ENCODE measurements at regions of chr16 and their contacts with region 1.

Region 1: DNA sequence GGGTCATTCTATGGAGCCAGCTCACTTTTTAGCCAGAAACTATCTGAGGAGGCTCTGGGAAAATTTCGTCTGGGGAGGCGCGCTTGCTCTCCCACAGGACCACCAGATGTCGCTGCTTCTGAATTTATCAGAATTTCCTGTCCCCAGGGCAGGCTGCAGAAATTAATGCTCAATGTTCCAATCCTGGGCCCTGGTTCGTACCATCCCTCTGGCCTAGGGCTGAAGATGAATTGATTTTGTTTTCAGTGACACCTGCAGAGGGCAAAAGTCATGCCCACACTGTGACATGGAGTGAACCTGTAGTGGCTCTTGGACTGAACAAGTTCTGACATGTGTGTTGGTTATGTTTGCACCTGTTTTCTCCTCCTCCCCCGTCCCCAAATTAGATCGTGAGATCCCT is 482.6 kb downstream of the NPIPA7 start:
- DNase-seq: peak; percentile 22 to 25
- ATAC-seq: peak in 3 of 8 donors; percentile 16 to 41 (median 32)
- H3K4me3 ChIP-seq: no peak overlapping the region
- H3K27ac ChIP-seq: no peak overlapping the region
- H3K4me1 ChIP-seq: peaks cover 0 to 30% (median 5%) of the 10 kb centered on the region in 9 donors
- H3K27me3 ChIP-seq: peaks cover 0 to 14% (median 0%) of the 10 kb centered on the region in 7 donors
- CTCF ChIP-seq: peak; percentile 29 to 82 (median 73)

Region 2: DNA sequence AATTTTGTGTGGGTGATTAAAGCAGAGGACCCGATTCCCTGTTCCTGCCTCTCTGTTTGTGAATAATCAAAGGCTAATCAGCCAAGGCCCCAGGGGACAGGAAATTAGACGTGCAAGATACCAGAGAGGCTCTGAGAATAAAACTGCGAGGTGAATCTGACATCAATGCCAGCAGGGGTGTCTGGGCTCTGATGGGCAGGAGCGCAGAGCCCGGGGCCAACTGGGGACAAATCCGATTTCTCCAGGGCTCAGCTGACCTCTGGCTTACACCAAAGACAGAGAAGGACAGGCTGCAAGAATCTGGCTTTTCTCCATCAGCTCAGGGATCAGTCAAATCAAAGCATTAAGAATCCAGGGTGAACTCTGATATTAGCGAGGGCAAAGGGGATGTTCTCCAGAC is 434.9 kb after region 1 on chr16:
- intact Hi-C with region 1: loop called in 1 of 10 experiments (anchors 10 kb)
- DNase-seq: peak; percentile 19 to 39
- ATAC-seq: peak in 7 of 8 donors; percentile 34 to 85 (median 64)
- H3K4me3 ChIP-seq: no peak overlapping the region
- H3K27ac ChIP-seq: peak overlapping the region in 5 of 10 donors; percentile 12 to 55 (median 40)
- H3K4me1 ChIP-seq: peaks cover 2 to 17% (median 10%) of the 10 kb centered on the region in 9 donors
- H3K27me3 ChIP-seq: no peaks in the 10 kb centered on the region
- CTCF ChIP-seq: no peak

Region 3: DNA sequence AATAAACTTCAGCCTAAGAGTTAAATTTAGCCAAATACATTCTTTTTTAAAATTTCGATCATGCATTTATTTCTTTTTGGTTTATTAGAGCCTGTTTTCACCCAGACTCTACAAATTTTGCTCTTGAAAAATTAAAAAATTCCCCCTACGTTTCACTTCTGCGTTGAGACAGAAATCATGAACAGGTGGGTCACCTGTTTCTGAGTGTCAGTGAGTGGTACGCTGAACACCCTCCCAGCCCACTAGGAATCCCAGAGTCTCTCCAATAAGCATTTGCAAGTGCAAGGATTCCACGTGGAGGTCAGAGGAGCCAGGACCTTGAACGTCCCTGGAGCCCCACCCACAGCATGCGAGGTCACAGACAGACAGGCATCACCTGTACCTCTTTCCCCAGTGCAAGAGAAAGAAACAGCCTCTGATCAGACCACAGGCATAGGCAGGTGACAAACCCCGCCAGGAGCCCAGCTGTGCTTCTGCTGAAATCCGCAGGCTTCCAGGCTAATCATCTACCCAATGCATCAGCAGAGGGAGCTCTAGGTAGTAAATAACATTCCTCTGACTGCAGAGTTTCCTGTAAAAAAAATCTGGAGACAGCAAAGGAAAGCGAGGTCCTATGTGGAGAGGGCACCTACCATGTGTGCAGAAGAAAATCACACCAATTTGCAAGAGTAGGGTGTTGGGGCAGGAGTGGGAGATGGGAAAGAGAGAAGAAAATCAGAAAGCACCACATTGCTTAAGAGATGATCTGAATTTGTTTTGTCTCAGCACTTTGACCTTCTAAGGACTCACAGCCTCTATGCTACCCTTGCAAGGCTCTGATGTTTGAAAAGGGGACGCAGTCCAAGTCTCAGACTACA is 615.1 kb after region 1 on chr16:
- intact Hi-C with region 1: loop called in 1 of 10 experiments (anchors 10 kb)
- DNase-seq: no peak
- ATAC-seq: peak in 7 of 8 donors; percentile 58 to 77 (median 68)
- H3K4me3 ChIP-seq: no peak overlapping the region
- H3K27ac ChIP-seq: no peak overlapping the region
- H3K4me1 ChIP-seq: peaks cover 0 to 19% (median 0%) of the 10 kb centered on the region in 9 donors
- H3K27me3 ChIP-seq: peaks cover 0 to 68% (median 43%) of the 10 kb centered on the region in 7 donors
- CTCF ChIP-seq: peak in 8 of 9 donors; percentile 14 to 64 (median 54)

Region 4: DNA sequence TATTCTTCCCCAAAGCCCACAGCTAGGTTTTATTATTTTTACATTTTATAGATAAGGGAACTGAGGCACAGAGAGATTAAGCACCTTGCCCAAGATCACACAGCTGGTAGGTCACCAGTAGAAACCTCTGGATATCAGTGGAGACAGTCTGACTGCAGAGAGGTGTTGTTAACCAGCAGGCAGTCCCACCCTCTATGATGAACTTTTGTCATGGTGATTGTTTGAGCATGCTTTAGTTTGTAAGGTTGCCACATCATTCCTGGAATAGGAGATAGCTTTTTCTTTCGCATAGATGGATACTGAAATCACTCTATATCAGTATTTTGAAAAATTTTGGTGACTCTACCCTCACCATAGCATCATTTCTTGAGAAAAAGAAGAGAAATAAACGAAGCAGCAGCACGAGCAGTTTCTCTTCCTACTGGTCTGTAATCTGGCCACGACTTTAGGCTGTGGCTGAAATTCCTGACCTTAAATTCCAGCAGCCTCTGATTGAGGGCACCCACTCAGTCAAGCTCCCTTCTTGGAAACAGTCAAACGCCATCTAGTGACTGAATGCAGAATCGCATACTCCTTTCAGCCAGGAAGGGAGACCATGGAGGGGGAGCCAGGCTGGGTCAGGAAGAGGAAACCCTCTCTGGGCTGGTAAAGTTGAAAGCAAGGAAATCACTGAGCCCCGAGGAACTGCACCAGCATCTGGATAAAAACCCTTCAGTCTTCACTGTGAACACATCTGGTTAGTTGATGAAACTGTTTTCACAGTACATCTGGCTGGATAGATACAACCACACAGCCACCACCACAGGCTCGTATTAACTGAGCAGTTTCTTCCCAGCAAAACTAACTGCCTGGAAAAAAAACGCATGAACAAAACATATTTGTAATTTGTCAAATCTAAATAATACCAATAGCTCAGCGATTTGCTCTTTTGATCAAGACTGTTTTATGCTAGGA is 717.7 kb after region 1 on chr16:
- intact Hi-C with region 1: loop called in 6 of 10 experiments (anchors 5 to 10 kb)
- DNase-seq: peak in 1 of 2 donors; percentile 58
- ATAC-seq: peak in 7 of 8 donors; percentile 45 to 83 (median 71)
- H3K4me3 ChIP-seq: no peak overlapping the region
- H3K27ac ChIP-seq: no peak overlapping the region
- H3K4me1 ChIP-seq: peaks cover 0 to 10% (median 0%) of the 10 kb centered on the region in 9 donors
- H3K27me3 ChIP-seq: peaks cover 0 to 5% (median 0%) of the 10 kb centered on the region in 7 donors
- CTCF ChIP-seq: peak; percentile 60 to 89 (median 83)